Activated CD4-positive, alpha-beta memory T cell treated with anti-CD3 and anti-CD28 coated beads for 36 hours (primary cell): ENCODE measurements at regions of chr2 and their contacts with region 1.

Region 1: GRCh38 chr2:101205521-101205998 is 47.1 kb upstream of the CNOT11 start:
- DNase-seq: peak; percentile 64
- H3K4me3 Mint-ChIP-seq: peak overlapping the region; percentile 20
- H3K27ac Mint-ChIP-seq: no peak overlapping the region
- H3K4me1 Mint-ChIP-seq: peaks cover 2% of the 10 kb centered on the region
- H3K27me3 Mint-ChIP-seq: no peaks in the 10 kb centered on the region

Region 2: DNA sequence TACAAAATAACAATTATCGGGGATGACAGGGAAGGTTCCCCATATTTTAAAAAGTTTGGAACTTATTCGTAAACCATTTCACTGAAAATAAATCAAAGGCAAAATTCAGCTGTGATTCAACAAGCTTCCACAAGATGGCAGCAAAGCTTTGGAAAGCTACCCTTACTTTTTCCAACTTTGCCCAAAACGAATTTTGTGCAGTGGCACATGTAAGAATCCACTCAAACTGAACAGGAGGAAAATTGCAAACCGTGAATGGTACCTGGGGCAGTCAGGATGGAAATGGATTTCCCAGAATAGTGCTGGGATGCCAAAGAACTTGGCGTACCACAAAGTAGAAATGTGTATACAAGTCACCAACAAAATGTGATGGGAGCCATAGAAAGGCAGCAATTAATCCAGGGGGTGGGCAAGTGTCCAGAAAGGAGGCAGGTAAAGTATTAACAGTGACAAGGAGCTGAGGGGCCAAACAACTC is 192.8 kb before region 1 on chr2:
- CTCF ChIA-PET with region 1: interaction called, 27 read pairs
- POLR2A ChIA-PET with region 1: no interaction called
- intact Hi-C with region 1: loop called (anchors 1 kb)
- DNase-seq: peak; percentile 24
- H3K4me3 Mint-ChIP-seq: no peak overlapping the region
- H3K27ac Mint-ChIP-seq: no peak overlapping the region
- H3K4me1 Mint-ChIP-seq: peaks cover 29% of the 10 kb centered on the region
- H3K27me3 Mint-ChIP-seq: no peaks in the 10 kb centered on the region

Region 3: GRCh38 chr2:101026253-101026701 is 179.3 kb before region 1 on chr2:
- CTCF ChIA-PET with region 1: no interaction called
- POLR2A ChIA-PET with region 1: no interaction called
- intact Hi-C with region 1: no loop called
- DNase-seq: no peak
- H3K4me3 Mint-ChIP-seq: no peak overlapping the region
- H3K27ac Mint-ChIP-seq: no peak overlapping the region
- H3K4me1 Mint-ChIP-seq: no peaks in the 10 kb centered on the region
- H3K27me3 Mint-ChIP-seq: no peaks in the 10 kb centered on the region

Region 4: GRCh38 chr2:101036562-101037457 is 168.8 kb before region 1 on chr2:
- CTCF ChIA-PET with region 1: interaction called, 25 read pairs
- POLR2A ChIA-PET with region 1: no interaction called
- intact Hi-C with region 1: loop called (anchors 1 kb)
- DNase-seq: no peak
- H3K4me3 Mint-ChIP-seq: no peak overlapping the region
- H3K27ac Mint-ChIP-seq: no peak overlapping the region
- H3K4me1 Mint-ChIP-seq: no peaks in the 10 kb centered on the region
- H3K27me3 Mint-ChIP-seq: no peaks in the 10 kb centered on the region